ENCODE measurements at regions of chr10 and their contacts with region 1.

Region 1: GRCh38 chr10:110137142-110137545 is 70.3 kb upstream of the MXI1 start:
- DNase-seq: no peak
- H3K4me3 Mint-ChIP-seq: no peak overlapping the region
- H3K27ac Mint-ChIP-seq: no peak overlapping the region
- H3K4me1 Mint-ChIP-seq: peaks cover 6% of the 10 kb centered on the region
- H3K27me3 Mint-ChIP-seq: no peaks in the 10 kb centered on the region
- CTCF ChIP-seq: peak; percentile 70

Region 2: DNA sequence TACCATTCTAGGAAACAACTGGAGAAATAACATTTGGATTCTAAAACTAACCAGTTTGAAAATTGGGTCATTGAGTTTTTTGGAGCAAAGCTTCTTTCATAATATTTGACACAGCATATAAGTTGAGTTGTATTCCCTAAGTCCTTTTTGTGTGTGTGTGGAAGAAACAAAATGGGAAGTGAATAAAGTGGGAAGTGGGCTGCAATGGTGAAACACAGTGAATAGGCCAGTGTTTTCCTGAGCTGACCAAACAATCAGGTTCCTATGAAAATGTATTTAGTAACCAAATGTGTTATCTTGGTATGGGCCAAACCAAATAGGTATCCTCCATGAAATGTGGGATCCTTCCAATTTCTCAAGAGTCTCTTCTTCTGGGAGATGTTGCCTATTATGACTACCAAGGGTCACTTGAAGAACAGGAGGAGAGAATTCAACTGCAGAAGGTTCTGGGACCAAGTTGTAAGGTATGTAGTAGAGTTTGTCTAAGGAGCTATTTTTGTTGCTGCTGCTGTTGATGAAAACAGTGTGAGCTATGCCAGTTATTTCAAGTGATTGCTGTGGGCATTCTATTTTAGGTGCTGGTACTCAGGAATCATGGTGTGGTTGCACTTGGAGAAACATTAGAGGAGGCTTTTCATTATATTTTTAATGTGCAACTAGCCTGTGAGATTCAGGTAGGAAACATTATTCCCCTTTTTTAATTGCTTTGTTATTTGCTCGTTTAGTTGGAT is 18.1 kb before region 1 on chr10:
- CTCF ChIA-PET with region 1: no interaction called
- intact Hi-C with region 1: no loop called
- DNase-seq: no peak
- H3K4me3 Mint-ChIP-seq: no peak overlapping the region
- H3K27ac Mint-ChIP-seq: no peak overlapping the region
- H3K4me1 Mint-ChIP-seq: no peaks in the 10 kb centered on the region
- H3K27me3 Mint-ChIP-seq: no peaks in the 10 kb centered on the region
- CTCF ChIP-seq: no peak

Region 3: DNA sequence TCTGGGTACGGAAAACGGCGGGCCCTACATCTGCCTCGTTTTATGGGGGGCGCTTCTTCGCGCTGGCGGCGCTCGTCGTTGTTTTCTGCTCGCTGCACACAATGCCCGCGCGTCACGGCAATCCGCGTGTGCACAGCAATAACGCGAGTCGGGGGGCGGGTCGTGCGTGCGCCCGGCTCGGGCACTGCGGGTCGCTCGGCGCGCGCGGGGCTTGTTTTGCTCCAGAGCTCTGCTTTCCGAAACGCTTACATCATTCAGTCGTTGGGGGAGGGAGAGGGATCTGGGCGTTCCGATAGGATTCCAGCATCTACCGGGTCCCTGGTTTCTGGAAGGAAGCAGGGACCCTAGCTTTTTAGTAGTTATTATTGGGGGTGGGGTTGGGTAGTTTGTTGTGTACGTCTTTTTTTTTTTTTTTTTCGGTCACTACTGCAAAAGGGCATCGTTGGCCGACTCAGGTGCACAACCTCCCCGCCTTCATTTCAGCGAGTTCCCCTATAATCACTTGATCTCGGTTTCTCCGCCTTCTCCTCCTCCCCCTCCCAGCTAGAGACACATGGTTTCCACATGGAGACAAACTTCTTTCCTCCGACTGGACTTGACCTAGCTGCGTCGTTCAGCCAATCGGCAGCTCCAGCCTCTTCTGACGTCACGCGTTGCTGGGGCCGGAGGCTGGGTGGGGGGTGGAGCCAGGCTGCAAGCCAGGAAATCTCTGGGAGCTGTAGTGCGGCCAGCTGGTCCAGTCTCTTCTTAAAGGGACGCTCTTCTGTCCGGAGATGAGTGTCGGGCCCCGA is 73.7 kb after region 1 on chr10:
- CTCF ChIA-PET with region 1: interaction called, 5 read pairs
- intact Hi-C with region 1: loop called (anchors 5 kb)
- DNase-seq: peak; percentile 90
- H3K4me3 Mint-ChIP-seq: peak overlapping the region; percentile 81
- H3K27ac Mint-ChIP-seq: peak overlapping the region; percentile 87
- H3K4me1 Mint-ChIP-seq: peaks cover 26% of the 10 kb centered on the region
- H3K27me3 Mint-ChIP-seq: peaks cover 10% of the 10 kb centered on the region
- CTCF ChIP-seq: no peak

Region 4: GRCh38 chr10:110225756-110226542 is 88.8 kb after region 1 on chr10:
- CTCF ChIA-PET with region 1: interaction called, 4 read pairs
- intact Hi-C with region 1: loop called (anchors 2 kb)
- DNase-seq: peak; percentile 82
- H3K4me3 Mint-ChIP-seq: peak overlapping the region; percentile 76
- H3K27ac Mint-ChIP-seq: peak overlapping the region; percentile 82
- H3K4me1 Mint-ChIP-seq: peaks cover 16% of the 10 kb centered on the region
- H3K27me3 Mint-ChIP-seq: no peaks in the 10 kb centered on the region
- CTCF ChIP-seq: no peak

Region 5: GRCh38 chr10:110279407-110279986 is 142.4 kb after region 1 on chr10:
- CTCF ChIA-PET with region 1: interaction called, 3 read pairs
- intact Hi-C with region 1: loop called (anchors 1 kb)
- DNase-seq: peak; percentile 39
- H3K4me3 Mint-ChIP-seq: no peak overlapping the region
- H3K27ac Mint-ChIP-seq: no peak overlapping the region
- H3K4me1 Mint-ChIP-seq: peaks cover 5% of the 10 kb centered on the region
- H3K27me3 Mint-ChIP-seq: no peaks in the 10 kb centered on the region
- CTCF ChIP-seq: peak; percentile 26

Measured in Calu3 (cell line).